Motor neuron (in vitro differentiated cells): ENCODE measurements at regions of chr16 and their contacts with region 1.

Region 1: DNA sequence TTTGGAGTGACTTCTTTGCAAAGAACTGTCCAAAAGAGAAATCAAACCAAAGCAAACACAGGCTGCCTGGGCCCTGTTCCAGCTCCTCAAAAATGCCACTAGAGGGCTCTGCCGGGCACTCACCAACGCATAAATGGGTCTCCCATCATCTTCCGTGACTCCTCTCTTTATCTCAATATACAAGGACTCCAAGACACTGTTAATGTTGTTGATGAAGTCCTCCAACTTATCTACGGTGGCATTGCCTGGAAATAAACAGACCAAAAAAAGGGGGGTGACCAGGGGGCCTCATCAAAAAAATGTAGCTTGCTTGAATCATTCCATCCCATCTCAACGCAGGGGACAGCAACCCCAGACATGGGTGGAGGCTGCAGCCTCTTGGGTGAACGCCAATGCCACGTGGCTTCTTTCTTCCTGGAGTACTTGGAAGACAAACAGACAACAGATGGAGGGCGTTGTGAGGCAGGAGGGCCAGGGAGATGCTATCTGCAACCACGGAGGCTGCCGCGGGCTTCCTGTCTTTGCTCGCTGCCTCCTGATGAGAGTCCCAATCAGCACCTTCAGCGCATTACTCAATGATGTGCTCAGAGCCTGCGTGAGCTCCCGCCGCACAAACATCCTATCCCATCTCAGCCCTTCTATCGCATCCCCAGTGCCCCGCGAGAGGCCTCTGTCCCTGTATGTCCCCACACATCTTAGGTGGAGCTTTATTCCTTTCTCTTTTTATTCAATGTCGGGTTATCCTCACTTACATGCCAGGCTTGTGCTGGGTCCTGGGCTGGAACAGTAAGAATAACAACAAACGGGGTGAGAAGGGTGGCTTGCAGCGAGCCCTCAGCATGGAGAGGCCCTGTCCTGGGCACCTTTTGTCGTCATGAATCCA is 32.0 kb downstream of the KDM8 start:
- ATAC-seq: peak; percentile 62 to 96 (median 87)
- H3K4me3 ChIP-seq: no peak overlapping the region
- H3K27ac ChIP-seq: no peak overlapping the region
- H3K4me1 ChIP-seq: peaks cover 0 to 11% of the 10 kb centered on the region in 2 donors

Region 2: DNA sequence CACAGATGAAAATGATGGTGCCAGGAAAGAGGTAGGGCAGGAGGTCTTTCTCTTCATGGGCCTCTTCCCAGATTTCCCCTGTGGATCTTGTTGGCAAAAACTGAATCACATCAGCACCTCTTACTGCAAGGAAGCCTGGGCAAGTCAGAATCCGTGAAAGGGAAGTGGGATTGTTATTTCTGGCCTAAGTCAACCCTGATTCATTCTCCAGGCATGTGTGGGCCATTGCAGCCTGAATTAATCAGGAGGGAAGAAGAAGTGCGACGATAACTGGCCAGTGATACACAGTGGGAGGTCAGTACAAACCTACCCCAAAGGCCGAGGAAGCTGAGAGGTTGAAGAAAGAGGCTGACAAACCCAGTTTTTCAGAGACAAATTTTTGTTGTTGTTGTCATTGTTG is 51.2 kb after region 1 on chr16:
- in situ Hi-C with region 1: loop called in 1 of 9 experiments (anchors 10 kb)
- ATAC-seq: peak in 1 of 8 experiments; percentile 29
- H3K4me3 ChIP-seq: no peak overlapping the region
- H3K27ac ChIP-seq: no peak overlapping the region
- H3K4me1 ChIP-seq: no peaks in the 10 kb centered on the region

Region 3: GRCh38 chr16:27367461-27368357 is 132.4 kb after region 1 on chr16:
- in situ Hi-C with region 1: loop called in 1 of 9 experiments (anchors 10 kb)
- ATAC-seq: peak in 4 of 8 experiments; percentile 33 to 98 (median 88)
- H3K4me3 ChIP-seq: no peak overlapping the region
- H3K27ac ChIP-seq: no peak overlapping the region
- H3K4me1 ChIP-seq: no peaks in the 10 kb centered on the region

Region 4: GRCh38 chr16:27449434-27450195 is 214.3 kb after region 1 on chr16:
- in situ Hi-C with region 1: loop called in 1 of 9 experiments (anchors 25 kb)
- ATAC-seq: peak in 5 of 8 experiments; percentile 12 to 73 (median 52)
- H3K4me3 ChIP-seq: no peak overlapping the region
- H3K27ac ChIP-seq: peak overlapping the region in 1 of 2 donors; percentile 24
- H3K4me1 ChIP-seq: peaks cover 3 to 14% of the 10 kb centered on the region in 2 donors

Region 5: GRCh38 chr16:27685807-27686206 is 450.5 kb after region 1 on chr16:
- in situ Hi-C with region 1: no loop called
- ATAC-seq: peak in 1 of 8 experiments; percentile 64
- H3K4me3 ChIP-seq: no peak overlapping the region
- H3K27ac ChIP-seq: no peak overlapping the region
- H3K4me1 ChIP-seq: no peaks in the 10 kb centered on the region